ENCODE measurements at regions of chr6 and their contacts with region 1.

Region 1: GRCh38 chr6:104789770-104790190 is 69.9 kb downstream of the HACE1 start:
- DNase-seq: peak in 7 of 9 donors; percentile 43 to 78 (median 63)
- ATAC-seq: peak; percentile 96
- H3K4me3 ChIP-seq: no peak overlapping the region
- H3K4me3 Mint-ChIP-seq: peak overlapping the region in 7 of 10 donors; percentile 31 to 79 (median 49)
- H3K27ac ChIP-seq: no peak overlapping the region
- H3K27ac Mint-ChIP-seq: peak overlapping the region; percentile 21 to 86 (median 65)
- H3K4me1 ChIP-seq: peaks cover 8 to 10% of the 10 kb centered on the region in 2 donors
- H3K4me1 Mint-ChIP-seq: peaks cover 10 to 32% (median 19%) of the 10 kb centered on the region in 7 donors
- H3K27me3 ChIP-seq: no peaks in the 10 kb centered on the region
- H3K27me3 Mint-ChIP-seq: no peaks in the 10 kb centered on the region

Region 2: DNA sequence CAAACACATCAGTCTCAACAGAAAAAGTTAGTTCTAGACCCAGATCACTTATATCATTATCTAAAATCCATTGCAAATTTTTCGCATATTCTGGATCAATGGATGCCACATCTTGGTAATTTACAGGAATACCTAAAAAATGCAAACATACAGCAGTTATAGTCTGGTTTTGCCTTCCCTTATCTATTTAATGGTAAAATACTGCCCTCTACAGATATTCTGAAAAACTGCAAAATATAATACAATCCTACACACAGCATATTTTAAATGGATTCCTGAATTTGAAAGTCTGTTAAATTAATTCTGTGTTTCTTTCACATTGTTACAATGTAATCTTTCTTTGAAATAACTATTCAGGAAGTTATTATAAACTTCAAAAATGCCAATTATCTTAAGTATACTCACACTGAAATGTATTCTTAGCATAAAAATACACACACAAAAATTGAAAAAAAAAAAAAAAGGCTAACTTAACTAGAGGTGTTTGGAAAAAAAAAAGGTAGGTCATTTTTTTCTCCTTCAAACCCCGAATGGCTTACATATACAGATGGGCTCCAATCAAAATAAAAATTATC is 18.4 kb before region 1 on chr6:
- CTCF ChIA-PET with region 1: no interaction called
- POLR2A ChIA-PET with region 1: no interaction called
- intact Hi-C with region 1: loop called in 1 of 2 experiments (anchors 2 kb)
- DNase-seq: peak in 6 of 9 donors; percentile 14 to 51 (median 42)
- ATAC-seq: peak; percentile 78
- H3K4me3 ChIP-seq: no peak overlapping the region
- H3K4me3 Mint-ChIP-seq: no peak overlapping the region
- H3K27ac ChIP-seq: no peak overlapping the region
- H3K27ac Mint-ChIP-seq: peak overlapping the region in 1 of 9 donors; percentile 29
- H3K4me1 ChIP-seq: no peaks in the 10 kb centered on the region
- H3K4me1 Mint-ChIP-seq: peaks cover 3 to 14% (median 9%) of the 10 kb centered on the region in 7 donors
- H3K27me3 ChIP-seq: no peaks in the 10 kb centered on the region
- H3K27me3 Mint-ChIP-seq: no peaks in the 10 kb centered on the region

Region 3: DNA sequence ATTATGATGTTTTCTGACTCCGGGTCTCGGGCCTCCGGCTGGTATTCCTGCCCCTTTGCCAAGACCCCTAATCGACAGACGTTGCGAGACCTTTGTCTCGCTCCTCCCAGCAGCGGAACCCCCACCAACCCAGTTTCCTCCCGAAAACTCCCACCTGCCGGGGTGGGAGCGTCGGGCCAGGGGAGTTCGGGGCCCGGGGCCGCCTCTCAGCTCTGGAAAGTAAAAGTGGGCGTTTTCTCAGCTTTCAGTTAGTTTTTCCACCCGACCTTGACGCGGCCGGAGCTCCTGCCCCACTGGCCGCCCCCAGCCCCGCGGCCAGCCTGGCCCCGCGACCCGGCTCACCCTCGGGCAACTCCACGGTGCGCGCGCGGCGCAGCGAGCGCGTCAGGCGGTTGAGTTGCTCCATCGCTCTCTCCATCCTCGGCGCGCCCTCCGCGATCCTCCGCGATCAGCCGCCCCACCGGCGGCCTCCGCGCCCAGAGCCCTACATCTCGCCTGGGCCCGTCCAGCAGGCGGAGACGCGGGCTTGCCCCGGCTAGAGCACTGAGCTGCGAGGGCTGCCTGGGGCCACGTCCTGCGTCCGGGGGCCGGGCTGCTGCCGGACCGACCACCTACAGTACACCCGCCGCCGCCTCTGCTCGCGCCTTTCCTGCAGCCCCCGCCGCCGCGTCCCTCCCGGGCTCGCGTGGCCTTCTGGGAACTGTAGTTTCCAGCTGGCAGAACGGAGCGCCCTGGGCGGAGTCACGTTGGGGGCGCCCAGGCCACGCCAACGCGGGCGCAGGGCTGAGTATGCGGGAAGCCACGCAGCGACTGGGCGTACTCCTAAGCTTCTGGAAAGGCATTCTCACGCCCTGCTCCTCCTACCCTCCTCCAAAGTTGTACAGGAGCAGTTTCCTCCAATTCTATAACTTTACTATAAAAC is 69.7 kb after region 1 on chr6 and contains the start of gene HACE1:
- CTCF ChIA-PET with region 1: interaction called, 3 read pairs
- POLR2A ChIA-PET with region 1: no interaction called
- intact Hi-C with region 1: loop called (anchors 1 to 5 kb)
- DNase-seq: peak; percentile 75 to 91 (median 89)
- ATAC-seq: peak; percentile 98
- H3K4me3 ChIP-seq: peak within 1 kb of the TSS; percentile 79
- H3K4me3 Mint-ChIP-seq: peak within 1 kb of the TSS; percentile 87 to 95 (median 92)
- H3K27ac ChIP-seq: peak within 1 kb of the TSS; percentile 69
- H3K27ac Mint-ChIP-seq: peak within 1 kb of the TSS; percentile 18 to 92 (median 86)
- H3K4me1 ChIP-seq: peaks cover 8 to 9% of the 10 kb centered on the region in 2 donors
- H3K4me1 Mint-ChIP-seq: peaks cover 10 to 30% (median 18%) of the 10 kb centered on the region in 7 donors
- H3K27me3 ChIP-seq: no peaks in the 10 kb centered on the region
- H3K27me3 Mint-ChIP-seq: peaks cover 3 to 20% (median 13%) of the 10 kb centered on the region in 5 donors
- total RNA-seq, gene HACE1: 11.4 to 17.1 (median 16.1) TPM

Region 4: DNA sequence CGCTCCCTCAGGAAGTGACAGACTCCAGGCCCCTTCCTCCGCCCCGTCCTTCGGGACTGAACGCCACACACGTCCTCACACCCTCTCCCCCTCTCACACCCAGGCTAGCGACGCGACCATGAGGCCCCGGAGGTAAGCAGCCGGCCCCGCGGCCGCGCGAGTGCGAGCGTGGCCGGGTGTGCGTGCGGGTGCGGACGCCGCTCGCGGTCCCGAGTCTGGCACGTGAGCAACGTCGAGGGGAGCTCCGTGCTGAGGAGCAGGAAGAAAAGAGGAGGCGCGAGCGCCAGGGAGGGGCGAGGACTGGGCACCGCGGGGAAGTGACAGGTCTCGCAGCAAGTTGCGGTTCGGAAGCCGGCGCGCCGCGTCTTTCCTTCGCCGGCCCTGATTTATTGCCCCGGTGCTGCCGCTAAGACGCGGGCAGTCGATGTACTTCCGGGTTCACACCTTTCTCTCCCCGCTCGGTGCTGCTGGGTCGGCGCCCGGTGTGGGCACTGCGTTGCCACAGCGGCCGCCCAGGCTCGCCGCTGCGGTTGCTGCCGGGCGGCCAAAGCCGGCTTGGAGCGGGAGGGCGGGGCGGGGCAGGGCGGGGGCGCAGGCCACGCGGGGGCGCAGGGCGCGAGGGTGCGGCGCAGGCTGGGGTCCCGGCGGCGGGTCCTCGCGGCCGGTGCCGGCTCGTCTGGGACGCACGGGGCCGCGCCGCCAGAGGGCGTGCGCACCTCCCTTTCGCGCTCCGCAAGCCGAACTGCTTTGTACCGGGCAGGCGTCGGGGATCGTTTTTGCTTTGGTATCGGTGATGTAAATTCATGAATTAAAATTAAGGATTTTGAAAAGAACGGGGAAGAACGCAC is 151.3 kb after region 1 on chr6:
- CTCF ChIA-PET with region 1: no interaction called
- POLR2A ChIA-PET with region 1: no interaction called
- intact Hi-C with region 1: loop called in 1 of 2 experiments (anchors 5 kb)
- DNase-seq: peak in 5 of 9 donors; percentile 8 to 47 (median 20)
- ATAC-seq: peak; percentile 73
- H3K4me3 ChIP-seq: no peak overlapping the region
- H3K4me3 Mint-ChIP-seq: peak overlapping the region in 9 of 10 donors; percentile 57 to 71 (median 65)
- H3K27ac ChIP-seq: no peak overlapping the region
- H3K27ac Mint-ChIP-seq: no peak overlapping the region
- H3K4me1 ChIP-seq: no peaks in the 10 kb centered on the region
- H3K4me1 Mint-ChIP-seq: peaks cover 0 to 16% (median 7%) of the 10 kb centered on the region in 7 donors
- H3K27me3 ChIP-seq: peaks cover 6 to 28% of the 10 kb centered on the region in 2 donors
- H3K27me3 Mint-ChIP-seq: peaks cover 41 to 56% (median 50%) of the 10 kb centered on the region in 5 donors

Region 5: DNA sequence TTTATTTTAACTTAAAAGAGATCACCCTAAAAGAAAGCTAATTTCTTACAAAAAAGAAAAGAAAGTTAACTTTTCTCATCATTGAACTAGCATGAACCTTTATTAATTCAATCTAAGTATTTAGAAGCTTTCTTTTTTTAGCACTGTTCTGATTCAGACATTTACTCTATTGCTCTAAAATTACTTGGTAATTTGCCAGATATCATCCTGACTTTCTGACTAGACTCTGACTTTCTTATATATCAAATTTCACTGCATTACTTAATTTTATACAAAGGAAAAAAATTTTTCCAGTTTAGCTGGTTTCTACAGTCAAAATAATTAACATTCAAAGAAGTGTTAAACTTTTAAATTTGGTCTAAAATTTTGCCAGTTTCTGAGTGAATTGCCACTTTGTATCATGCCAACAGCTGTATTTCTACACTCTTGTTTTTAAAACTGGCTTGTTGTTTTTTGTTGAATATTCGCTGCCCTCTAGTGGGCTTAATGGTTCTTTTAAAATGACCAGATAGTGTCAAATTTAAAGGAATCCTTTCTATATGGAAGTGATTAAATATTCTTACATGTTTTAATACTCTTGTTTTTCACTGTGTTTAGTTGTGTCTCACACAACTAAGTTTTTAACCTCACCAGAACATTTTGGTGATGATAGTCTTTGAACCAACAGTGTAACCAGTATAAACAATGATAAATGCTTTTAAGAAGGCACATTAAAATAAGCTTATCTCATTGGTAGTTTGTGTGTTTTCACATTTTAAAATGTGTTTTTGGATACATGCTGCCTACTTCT is 288.0 kb after region 1 on chr6:
- CTCF ChIA-PET with region 1: interaction called, 3 read pairs
- POLR2A ChIA-PET with region 1: no interaction called
- intact Hi-C with region 1: loop called (anchors 1 kb)
- DNase-seq: peak in 3 of 9 donors; percentile 2 to 3 (median 3)
- ATAC-seq: no peak
- H3K4me3 ChIP-seq: no peak overlapping the region
- H3K4me3 Mint-ChIP-seq: no peak overlapping the region
- H3K27ac ChIP-seq: no peak overlapping the region
- H3K27ac Mint-ChIP-seq: no peak overlapping the region
- H3K4me1 ChIP-seq: no peaks in the 10 kb centered on the region
- H3K4me1 Mint-ChIP-seq: no peaks in the 10 kb centered on the region
- H3K27me3 ChIP-seq: no peaks in the 10 kb centered on the region
- H3K27me3 Mint-ChIP-seq: peaks cover 4 to 33% (median 15%) of the 10 kb centered on the region in 5 donors

Region 6: GRCh38 chr6:105424175-105424783 is 634.5 kb after region 1 on chr6:
- CTCF ChIA-PET with region 1: no interaction called
- POLR2A ChIA-PET with region 1: no interaction called
- intact Hi-C with region 1: loop called (anchors 1 to 5 kb)
- DNase-seq: peak; percentile 11 to 62 (median 45)
- ATAC-seq: peak; percentile 85
- H3K4me3 ChIP-seq: no peak overlapping the region
- H3K4me3 Mint-ChIP-seq: no peak overlapping the region
- H3K27ac ChIP-seq: no peak overlapping the region
- H3K27ac Mint-ChIP-seq: no peak overlapping the region
- H3K4me1 ChIP-seq: no peaks in the 10 kb centered on the region
- H3K4me1 Mint-ChIP-seq: peaks cover 0 to 3% (median 0%) of the 10 kb centered on the region in 7 donors
- H3K27me3 ChIP-seq: no peaks in the 10 kb centered on the region
- H3K27me3 Mint-ChIP-seq: peaks cover 0 to 19% (median 4%) of the 10 kb centered on the region in 5 donors